Activated CD8-positive, alpha-beta memory T cell treated with anti-CD3 and anti-CD28 coated beads, Interleukin-2, amount 10 ng/mL, durations not matched to agents 7 days and 5 days (primary cell): ENCODE measurements at regions of chr10 and their contacts with region 1.

Region 1: DNA sequence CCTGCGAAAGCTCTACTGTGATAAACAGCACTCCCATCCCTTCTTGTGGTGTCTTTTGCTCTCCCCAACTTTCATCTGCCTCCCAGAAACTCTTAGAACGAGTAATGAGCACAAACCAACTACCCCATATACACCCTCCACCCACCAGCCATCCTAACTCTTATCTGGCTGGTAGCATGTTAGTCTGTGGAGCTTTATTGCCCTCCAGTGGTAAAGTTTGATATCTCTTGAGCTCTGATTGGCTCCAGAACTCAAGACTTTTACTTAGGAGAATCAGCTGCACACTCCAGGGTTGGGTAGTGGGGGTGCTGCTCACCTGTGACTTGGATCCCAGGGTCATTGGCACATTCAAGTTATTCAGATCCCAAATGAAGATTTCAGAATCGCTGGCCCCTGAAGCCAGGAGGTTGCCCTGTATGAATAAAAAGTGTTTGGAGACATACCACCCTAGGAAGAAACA is 10.9 kb downstream of the SEC31B start:
- DNase-seq: peak; percentile 74
- ATAC-seq: peak; percentile 65
- H3K4me3 Mint-ChIP-seq: peak overlapping the region; percentile 74
- H3K27ac Mint-ChIP-seq: peak overlapping the region; percentile 97
- H3K4me1 Mint-ChIP-seq: peaks cover 90% of the 10 kb centered on the region
- H3K27me3 Mint-ChIP-seq: no peaks in the 10 kb centered on the region

Region 2: DNA sequence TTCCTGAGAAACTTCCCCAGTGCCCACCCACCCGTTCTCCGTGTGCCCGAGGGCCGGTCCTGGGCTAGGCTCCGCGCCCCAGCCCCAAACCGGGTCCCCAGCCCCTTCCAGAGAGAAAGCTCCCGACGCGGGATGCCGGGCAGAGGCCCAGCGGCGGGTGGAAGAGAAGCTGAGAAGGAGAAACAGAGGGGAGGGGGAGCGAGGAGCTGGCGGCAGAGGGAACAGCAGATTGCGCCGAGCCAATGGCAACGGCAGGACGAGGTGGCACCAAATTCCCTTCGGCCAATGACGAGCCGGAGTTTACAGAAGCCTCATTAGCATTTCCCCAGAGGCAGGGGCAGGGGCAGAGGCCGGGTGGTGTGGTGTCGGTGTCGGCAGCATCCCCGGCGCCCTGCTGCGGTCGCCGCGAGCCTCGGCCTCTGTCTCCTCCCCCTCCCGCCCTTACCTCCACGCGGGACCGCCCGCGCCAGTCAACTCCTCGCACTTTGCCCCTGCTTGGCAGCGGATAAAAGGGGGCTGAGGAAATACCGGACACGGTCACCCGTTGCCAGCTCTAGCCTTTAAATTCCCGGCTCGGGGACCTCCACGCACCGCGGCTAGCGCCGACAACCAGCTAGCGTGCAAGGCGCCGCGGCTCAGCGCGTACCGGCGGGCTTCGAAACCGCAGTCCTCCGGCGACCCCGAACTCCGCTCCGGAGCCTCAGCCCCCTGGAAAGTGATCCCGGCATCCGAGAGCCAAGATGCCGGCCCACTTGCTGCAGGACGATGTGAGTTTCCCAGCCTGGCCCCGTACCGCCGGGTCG is 161.8 kb before region 1 on chr10 and contains the start of gene SCD:
- CTCF ChIA-PET with region 1: interaction called, 109 read pairs
- DNase-seq: peak; percentile 94
- ATAC-seq: peak; percentile 93
- H3K4me3 Mint-ChIP-seq: peak within 1 kb of the TSS; percentile 98
- H3K27ac Mint-ChIP-seq: peak within 1 kb of the TSS; percentile 83
- H3K4me1 Mint-ChIP-seq: peaks cover 55% of the 10 kb centered on the region
- H3K27me3 Mint-ChIP-seq: no peaks in the 10 kb centered on the region
- total RNA-seq, gene SCD: 121 to 134 TPM

Region 3: GRCh38 chr10:100373298-100374136 is 135.2 kb before region 1 on chr10:
- CTCF ChIA-PET with region 1: interaction called, 10 read pairs
- DNase-seq: peak; percentile 98
- ATAC-seq: peak; percentile 87
- H3K4me3 Mint-ChIP-seq: no peak overlapping the region
- H3K27ac Mint-ChIP-seq: no peak overlapping the region
- H3K4me1 Mint-ChIP-seq: peaks cover 45% of the 10 kb centered on the region
- H3K27me3 Mint-ChIP-seq: no peaks in the 10 kb centered on the region

Region 4: GRCh38 chr10:100438674-100439315 is 69.9 kb before region 1 on chr10:
- CTCF ChIA-PET with region 1: interaction called, 272 read pairs
- DNase-seq: no peak
- ATAC-seq: no peak
- H3K4me3 Mint-ChIP-seq: no peak overlapping the region
- H3K27ac Mint-ChIP-seq: no peak overlapping the region
- H3K4me1 Mint-ChIP-seq: peaks cover 4% of the 10 kb centered on the region
- H3K27me3 Mint-ChIP-seq: peaks cover 3% of the 10 kb centered on the region

Region 5: DNA sequence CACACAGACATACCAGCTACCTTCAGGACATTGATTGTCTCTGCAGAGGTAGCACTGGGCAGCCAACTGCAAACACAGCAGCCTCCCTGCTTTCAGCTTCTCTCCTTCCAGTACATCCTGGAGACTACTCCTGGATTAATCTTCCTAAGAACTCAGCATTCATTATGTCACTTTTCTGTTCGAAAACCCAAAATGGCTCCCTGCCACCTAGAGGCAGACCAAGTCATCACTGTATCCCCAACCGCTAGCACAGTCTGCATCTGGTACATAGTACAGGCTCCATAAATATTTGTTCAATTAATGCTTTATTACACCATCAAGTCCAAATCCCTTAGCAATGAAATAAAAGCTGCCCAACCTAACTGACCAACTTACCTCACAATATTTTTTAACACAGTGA is 15.9 kb after region 1 on chr10:
- CTCF ChIA-PET with region 1: interaction called, 88 read pairs
- DNase-seq: no peak
- ATAC-seq: no peak
- H3K4me3 Mint-ChIP-seq: no peak overlapping the region
- H3K27ac Mint-ChIP-seq: peak overlapping the region; percentile 28
- H3K4me1 Mint-ChIP-seq: peaks cover 28% of the 10 kb centered on the region
- H3K27me3 Mint-ChIP-seq: no peaks in the 10 kb centered on the region

Region 6: GRCh38 chr10:100535715-100536353 is 27.1 kb after region 1 on chr10 and contains the start of gene HIF1AN:
- CTCF ChIA-PET with region 1: interaction called, 15 read pairs
- DNase-seq: peak; percentile 94
- ATAC-seq: peak; percentile 98
- H3K4me3 Mint-ChIP-seq: no peak within 1 kb of the TSS
- H3K27ac Mint-ChIP-seq: no peak within 1 kb of the TSS
- H3K4me1 Mint-ChIP-seq: peaks cover 12% of the 10 kb centered on the region
- H3K27me3 Mint-ChIP-seq: no peaks in the 10 kb centered on the region
- total RNA-seq, gene HIF1AN: 49.2 to 53.6 TPM